Activated T-helper 1 cell treated with anti-CD3 and anti-CD28 coated beads, Interleukin-12 subunit alpha, Interleukin-12 subunit beta, Interleukin-2, Interleukin-4 antibody, amounts not matched to agents 30 ng/mL and 10 ng/mL and 1 ng/mL, durations not matched to agents 14 hours and 24 hours and 36 hours (primary cell): ENCODE measurements at regions of chr20 and their contacts with region 1.

Region 1: DNA sequence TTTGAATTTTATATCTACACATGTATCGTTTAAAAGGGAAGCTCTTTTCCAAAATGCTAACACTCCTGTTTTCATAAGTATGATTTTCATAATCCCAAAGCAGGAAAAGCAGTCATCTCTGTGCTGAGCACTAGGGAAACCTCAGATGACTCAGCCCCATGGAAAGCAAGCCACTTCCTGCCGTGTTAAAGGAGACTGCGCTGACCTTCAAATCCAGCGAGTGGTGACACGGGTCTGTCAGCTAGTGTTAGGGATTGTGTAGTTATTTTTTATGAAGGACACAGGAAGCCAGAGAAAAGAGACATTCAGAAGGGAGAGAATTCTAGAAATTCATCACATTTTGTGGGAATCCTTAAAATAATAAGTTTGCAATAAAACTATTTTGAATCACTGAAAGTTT is 57.0 kb upstream of the CD93 start:
- DNase-seq: peak; percentile 32
- H3K4me3 Mint-ChIP-seq: peak overlapping the region; percentile 34
- H3K27ac Mint-ChIP-seq: peak overlapping the region; percentile 73
- H3K4me1 Mint-ChIP-seq: peaks cover 74% of the 10 kb centered on the region
- H3K27me3 Mint-ChIP-seq: peaks cover 12% of the 10 kb centered on the region

Region 2: GRCh38 chr20:23086056-23086566 is 57.0 kb before region 1 on chr20 and contains the start of gene CD93:
- intact Hi-C with region 1: loop called (anchors 1 kb)
- DNase-seq: peak; percentile 42
- H3K4me3 Mint-ChIP-seq: peak within 1 kb of the TSS; percentile 69
- H3K27ac Mint-ChIP-seq: peak within 1 kb of the TSS; percentile 87
- H3K4me1 Mint-ChIP-seq: peaks cover 30% of the 10 kb centered on the region
- H3K27me3 Mint-ChIP-seq: peaks cover 7% of the 10 kb centered on the region
- total RNA-seq, gene CD93: 1.2 and 1.3 TPM in 2 replicates